ENCODE measurements at regions of chr11 and their contacts with region 1.

Region 1: DNA sequence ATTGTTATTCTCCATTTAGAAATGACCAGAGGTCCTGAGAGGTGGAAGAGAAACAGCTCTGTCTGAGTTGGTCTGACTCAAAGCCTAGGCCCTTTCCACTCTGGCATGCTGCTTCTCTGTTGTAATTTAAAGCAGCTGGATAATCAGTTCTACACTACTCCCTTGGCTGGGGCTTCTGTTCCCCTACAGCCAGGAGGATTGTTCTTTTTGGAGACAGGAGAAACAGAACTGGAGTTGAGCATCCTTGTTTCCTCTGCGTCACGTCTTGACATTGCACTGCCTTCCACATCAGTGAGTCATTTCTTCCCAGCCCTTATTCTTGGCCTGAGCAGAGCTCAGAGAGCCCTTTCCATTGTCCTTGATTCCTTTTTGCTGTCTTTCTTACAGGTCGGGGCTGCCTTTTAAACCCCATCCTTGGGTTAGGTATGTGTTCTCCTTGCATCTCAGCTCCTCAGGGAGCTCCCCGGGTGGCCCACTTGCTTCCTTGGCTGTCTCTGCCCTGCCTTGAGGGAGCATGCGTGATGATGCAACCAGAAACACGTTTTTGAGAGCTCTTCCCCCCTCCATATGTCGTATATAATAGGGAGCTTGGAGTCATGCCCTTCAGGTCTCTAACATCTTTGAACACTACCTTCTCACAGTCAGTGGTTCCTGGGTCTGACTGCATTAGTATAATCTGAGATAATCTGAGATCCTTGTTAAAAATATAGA is 35.7 kb downstream of the CYB5R2 start:
- DNase-seq: peak in 4 of 5 donors; percentile 36 to 44 (median 37)
- ATAC-seq: peak; percentile 66 to 94 (median 82)
- H3K4me3 ChIP-seq: no peak overlapping the region
- H3K27ac ChIP-seq: peak overlapping the region in 11 of 12 donors; percentile 4 to 80 (median 61)
- H3K4me1 ChIP-seq: peaks cover 0 to 19% (median 9%) of the 10 kb centered on the region in 12 donors
- H3K27me3 ChIP-seq: no peaks in the 10 kb centered on the region
- CTCF ChIP-seq: no peak
- POLR2A ChIP-seq: no peak

Region 2: DNA sequence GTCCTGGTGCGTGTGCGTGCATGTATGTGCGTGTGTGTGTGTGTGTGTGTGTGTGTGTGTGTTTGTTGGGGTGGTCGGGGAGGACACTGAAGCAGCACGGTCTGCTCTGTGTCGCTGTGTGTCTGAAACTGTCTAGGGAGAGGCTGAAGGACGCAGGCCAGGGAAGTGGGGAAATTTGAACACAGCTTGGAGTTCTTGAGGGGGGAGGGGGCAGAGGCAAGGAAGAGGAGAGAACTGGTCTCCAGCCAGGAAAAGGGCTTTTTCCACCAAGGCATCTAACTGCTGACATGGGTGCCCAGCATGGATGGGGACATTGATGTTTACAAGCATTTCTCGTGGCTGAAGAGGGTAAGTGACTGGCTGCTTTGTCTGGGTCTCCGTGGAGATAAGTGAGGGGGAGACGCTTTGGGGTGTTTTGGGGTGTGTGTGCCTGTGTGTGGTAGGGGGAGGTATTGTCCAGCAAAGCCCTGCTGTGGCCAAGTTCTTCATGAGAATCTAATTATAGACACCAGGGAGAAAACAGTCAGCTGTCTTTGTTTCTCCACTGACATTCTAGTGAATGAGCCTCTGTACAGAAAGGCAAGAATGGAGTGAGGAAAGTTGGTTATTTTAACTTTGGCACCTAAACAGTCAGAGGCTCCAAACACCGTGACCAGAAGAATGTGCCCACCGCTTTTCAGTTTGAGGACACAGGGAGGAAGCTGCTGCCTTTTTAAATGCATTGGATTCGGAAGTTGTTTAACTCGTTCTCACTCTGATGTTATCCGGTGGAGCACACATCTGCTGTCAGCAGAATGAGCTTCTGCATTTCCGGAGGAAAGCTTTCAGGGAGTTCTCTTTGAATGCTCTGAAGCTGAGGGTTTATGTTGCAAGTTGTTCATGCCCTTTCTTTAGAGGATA is 60.1 kb before region 1 on chr11:
- intact Hi-C with region 1: loop called in 1 of 10 experiments (anchors 5 kb)
- DNase-seq: peak in 4 of 5 donors; percentile 44 to 64 (median 57)
- ATAC-seq: peak; percentile 53 to 75 (median 58)
- H3K4me3 ChIP-seq: peak overlapping the region; percentile 3 to 66 (median 47)
- H3K27ac ChIP-seq: peak overlapping the region; percentile 68 to 91 (median 80)
- H3K4me1 ChIP-seq: peaks cover 7 to 77% (median 45%) of the 10 kb centered on the region in 12 donors
- H3K27me3 ChIP-seq: peaks cover 0 to 16% (median 0%) of the 10 kb centered on the region in 9 donors
- CTCF ChIP-seq: no peak
- POLR2A ChIP-seq: peak in 1 of 2 donors; percentile 11

Measured in heart left ventricle (tissue), 16 donors.